GM12878 (cell line): ENCODE measurements at regions of chr5 and their contacts with region 1.

Region 1: DNA sequence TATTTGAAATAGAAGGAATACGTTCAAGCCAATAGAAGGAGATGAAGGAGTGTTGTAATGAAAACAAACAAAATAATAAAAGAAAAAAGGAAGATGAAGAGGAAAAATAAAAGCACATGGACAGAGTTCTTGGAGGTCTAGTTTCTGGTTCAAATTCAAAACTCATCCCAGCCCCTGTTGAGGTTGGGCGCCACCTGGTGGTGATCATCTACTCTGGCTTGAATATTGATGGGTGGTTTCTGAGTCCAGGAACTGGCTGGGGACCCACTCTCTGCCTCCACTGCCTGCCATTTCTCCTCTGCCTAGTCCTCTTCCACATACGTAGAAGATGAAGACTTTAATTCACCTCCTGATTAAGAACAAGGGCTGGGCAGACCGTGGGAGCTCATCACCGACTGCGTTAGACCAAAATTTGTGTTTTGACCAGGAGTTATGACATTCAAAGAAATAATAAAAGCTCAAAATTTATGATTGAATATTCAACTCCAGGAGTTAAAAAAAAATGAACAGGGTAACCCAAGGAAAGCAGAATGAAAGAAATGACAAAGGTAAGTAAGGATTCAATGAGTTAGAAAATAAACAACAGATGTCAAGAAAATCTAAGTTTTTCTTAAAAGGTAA is 99.0 kb upstream of the SLC1A3 start:
- DNase-seq: peak; percentile 3
- ATAC-seq: peak; percentile 90
- H3K4me3 ChIP-seq: no peak overlapping the region
- H3K27ac ChIP-seq: no peak overlapping the region
- H3K4me1 ChIP-seq: no peaks in the 10 kb centered on the region
- H3K27me3 ChIP-seq: no peaks in the 10 kb centered on the region
- CTCF ChIP-seq: peak; percentile 69 to 77 (median 71)
- EP300 ChIP-seq: no peak
- POLR2A ChIP-seq: no peak
- RAD21 ChIP-seq: peak; percentile 80

Region 2: GRCh38 chr5:36177715-36178523 is 329.5 kb before region 1 on chr5:
- CTCF ChIA-PET with region 1: interaction called, 5 read pairs
- POLR2A ChIA-PET with region 1: no interaction called
- RAD21 ChIA-PET with region 1: interaction called, 8 read pairs
- SMC1A ChIA-PET with region 1: interaction called, 6 read pairs
- in situ Hi-C with region 1: no loop called
- intact Hi-C with region 1: loop called (anchors 5 kb)
- DNase-seq: no peak
- ATAC-seq: peak; percentile 79
- H3K4me3 ChIP-seq: peak overlapping the region; percentile 1; the same call in 1 of the 2 replicates
- H3K27ac ChIP-seq: peak overlapping the region; percentile 50; the same call in 1 of the 2 replicates
- H3K4me1 ChIP-seq: peaks cover 14% of the 10 kb centered on the region
- H3K27me3 ChIP-seq: no peaks in the 10 kb centered on the region
- CTCF ChIP-seq: peak; percentile 13 to 37 (median 37); a peak in 4 of 6 replicates
- EP300 ChIP-seq: no peak
- POLR2A ChIP-seq: no peak
- RAD21 ChIP-seq: peak; percentile 54

Region 3: DNA sequence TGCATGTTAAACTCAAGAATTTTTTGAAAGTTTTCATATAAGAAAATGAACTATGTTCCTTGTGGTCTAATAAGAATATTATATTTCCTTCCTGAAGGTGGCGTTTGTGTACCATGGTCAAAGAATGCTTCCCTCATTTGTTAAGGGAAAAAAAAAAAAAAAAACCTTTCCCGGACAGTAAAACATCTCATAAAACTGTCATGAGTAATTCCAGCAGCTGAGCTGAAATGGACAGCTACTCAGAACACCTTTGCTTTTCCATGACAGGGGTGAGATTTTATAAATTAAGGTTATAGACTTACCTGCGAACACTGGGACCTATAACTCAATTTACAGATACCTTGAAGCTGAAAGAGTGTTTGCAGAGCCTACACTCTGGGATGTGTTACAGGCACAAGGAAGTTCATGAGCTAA is 92.6 kb before region 1 on chr5:
- CTCF ChIA-PET with region 1: interaction called, 85 read pairs
- POLR2A ChIA-PET with region 1: no interaction called
- RAD21 ChIA-PET with region 1: interaction called, 7 read pairs
- SMC1A ChIA-PET with region 1: interaction called, 34 read pairs
- in situ Hi-C with region 1: no loop called
- intact Hi-C with region 1: loop called (anchors 1 kb)
- DNase-seq: no peak
- ATAC-seq: no peak
- H3K4me3 ChIP-seq: no peak overlapping the region
- H3K27ac ChIP-seq: no peak overlapping the region
- H3K4me1 ChIP-seq: no peaks in the 10 kb centered on the region
- H3K27me3 ChIP-seq: no peaks in the 10 kb centered on the region
- CTCF ChIP-seq: peak in 2 of 3 experiments; percentile 19 to 44; a peak in 3 of 6 replicates
- EP300 ChIP-seq: no peak
- POLR2A ChIP-seq: no peak
- RAD21 ChIP-seq: peak; percentile 60

Region 4: DNA sequence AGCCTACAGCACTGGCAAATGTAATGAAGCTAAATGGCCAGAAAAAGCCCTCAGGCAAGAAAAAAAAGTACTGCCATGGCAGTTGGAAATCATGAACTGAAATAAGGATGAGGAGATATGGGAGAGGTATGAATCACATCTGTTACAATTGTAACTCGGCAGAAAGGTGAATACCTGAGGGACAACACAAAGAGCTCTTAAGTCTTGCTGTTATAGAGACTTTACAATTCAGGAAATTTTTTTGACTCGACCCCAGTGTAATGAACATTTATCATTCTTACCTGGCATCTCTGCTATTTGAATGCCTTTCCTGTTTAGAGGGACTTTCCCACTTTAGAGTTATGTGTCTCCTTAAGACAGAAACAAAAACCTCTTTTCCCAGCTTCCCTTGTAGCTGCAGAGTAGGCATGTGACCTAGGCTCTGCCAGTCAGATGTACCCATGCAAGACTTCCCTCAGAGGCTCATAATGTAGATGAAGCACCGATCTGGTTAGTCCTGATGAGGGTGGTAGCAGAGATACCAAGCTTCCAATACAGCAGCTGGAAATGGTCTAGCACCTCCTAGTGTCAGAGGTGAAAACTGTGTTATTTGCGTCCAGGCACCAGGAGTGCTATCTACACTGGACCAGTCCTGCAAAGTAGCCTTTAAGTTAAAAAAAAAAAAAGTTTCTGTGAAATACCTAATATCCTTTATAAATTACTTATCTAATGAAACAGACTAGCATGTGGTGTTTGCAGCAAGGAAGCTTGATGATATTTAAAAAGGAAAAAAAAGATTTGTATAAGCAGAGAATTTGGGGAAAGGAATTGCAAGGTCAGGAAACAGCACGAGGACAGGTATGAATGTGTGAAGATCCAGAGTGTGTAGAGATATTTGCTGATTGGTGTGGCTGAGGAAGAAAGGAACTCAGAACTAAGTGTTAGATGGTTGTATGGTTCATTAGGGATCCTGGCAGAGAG is 48.0 kb before region 1 on chr5:
- CTCF ChIA-PET with region 1: interaction called, 12 read pairs
- POLR2A ChIA-PET with region 1: no interaction called
- RAD21 ChIA-PET with region 1: no interaction called
- SMC1A ChIA-PET with region 1: no interaction called
- in situ Hi-C with region 1: no loop called
- intact Hi-C with region 1: no loop called
- DNase-seq: peak; percentile 4
- ATAC-seq: peak; percentile 68
- H3K4me3 ChIP-seq: no peak overlapping the region
- H3K27ac ChIP-seq: no peak overlapping the region
- H3K4me1 ChIP-seq: no peaks in the 10 kb centered on the region
- H3K27me3 ChIP-seq: no peaks in the 10 kb centered on the region
- CTCF ChIP-seq: peak in 2 of 3 experiments; percentile 35 to 38; a peak in 3 of 6 replicates
- EP300 ChIP-seq: no peak
- POLR2A ChIP-seq: no peak
- RAD21 ChIP-seq: 0 out of 2 replicates have a peak, but pooled peaks have one; percentile 6

Region 5: GRCh38 chr5:36494756-36495601 is 12.5 kb before region 1 on chr5:
- CTCF ChIA-PET with region 1: interaction called, 13 read pairs
- POLR2A ChIA-PET with region 1: no interaction called
- RAD21 ChIA-PET with region 1: no interaction called
- SMC1A ChIA-PET with region 1: interaction called, 3 read pairs
- in situ Hi-C with region 1: no loop called
- intact Hi-C with region 1: no loop called
- DNase-seq: no peak
- ATAC-seq: no peak
- H3K4me3 ChIP-seq: no peak overlapping the region
- H3K27ac ChIP-seq: no peak overlapping the region
- H3K4me1 ChIP-seq: no peaks in the 10 kb centered on the region
- H3K27me3 ChIP-seq: peaks cover 0 to 3% of the 10 kb centered on the region in 2 experiments; a peak in 2 of 4 replicates
- CTCF ChIP-seq: no peak
- EP300 ChIP-seq: no peak
- POLR2A ChIP-seq: no peak
- RAD21 ChIP-seq: no peak

Region 6: GRCh38 chr5:36695677-36696673 is 188.5 kb after region 1 on chr5:
- CTCF ChIA-PET with region 1: interaction called, 44 read pairs
- POLR2A ChIA-PET with region 1: no interaction called
- RAD21 ChIA-PET with region 1: interaction called, 6 read pairs
- SMC1A ChIA-PET with region 1: interaction called, 10 read pairs
- in situ Hi-C with region 1: no loop called
- intact Hi-C with region 1: loop called (anchors 1 kb)
- DNase-seq: no peak
- ATAC-seq: peak; percentile 76
- H3K4me3 ChIP-seq: no peak overlapping the region
- H3K27ac ChIP-seq: no peak overlapping the region
- H3K4me1 ChIP-seq: peaks cover 13% of the 10 kb centered on the region
- H3K27me3 ChIP-seq: no peaks in the 10 kb centered on the region
- CTCF ChIP-seq: peak; percentile 72 to 82 (median 77)
- EP300 ChIP-seq: no peak
- POLR2A ChIP-seq: no peak
- RAD21 ChIP-seq: peak; percentile 52; the same call in 1 of the 2 replicates